ENCODE measurements at regions of chr7 and their contacts with region 1.

Region 1: DNA sequence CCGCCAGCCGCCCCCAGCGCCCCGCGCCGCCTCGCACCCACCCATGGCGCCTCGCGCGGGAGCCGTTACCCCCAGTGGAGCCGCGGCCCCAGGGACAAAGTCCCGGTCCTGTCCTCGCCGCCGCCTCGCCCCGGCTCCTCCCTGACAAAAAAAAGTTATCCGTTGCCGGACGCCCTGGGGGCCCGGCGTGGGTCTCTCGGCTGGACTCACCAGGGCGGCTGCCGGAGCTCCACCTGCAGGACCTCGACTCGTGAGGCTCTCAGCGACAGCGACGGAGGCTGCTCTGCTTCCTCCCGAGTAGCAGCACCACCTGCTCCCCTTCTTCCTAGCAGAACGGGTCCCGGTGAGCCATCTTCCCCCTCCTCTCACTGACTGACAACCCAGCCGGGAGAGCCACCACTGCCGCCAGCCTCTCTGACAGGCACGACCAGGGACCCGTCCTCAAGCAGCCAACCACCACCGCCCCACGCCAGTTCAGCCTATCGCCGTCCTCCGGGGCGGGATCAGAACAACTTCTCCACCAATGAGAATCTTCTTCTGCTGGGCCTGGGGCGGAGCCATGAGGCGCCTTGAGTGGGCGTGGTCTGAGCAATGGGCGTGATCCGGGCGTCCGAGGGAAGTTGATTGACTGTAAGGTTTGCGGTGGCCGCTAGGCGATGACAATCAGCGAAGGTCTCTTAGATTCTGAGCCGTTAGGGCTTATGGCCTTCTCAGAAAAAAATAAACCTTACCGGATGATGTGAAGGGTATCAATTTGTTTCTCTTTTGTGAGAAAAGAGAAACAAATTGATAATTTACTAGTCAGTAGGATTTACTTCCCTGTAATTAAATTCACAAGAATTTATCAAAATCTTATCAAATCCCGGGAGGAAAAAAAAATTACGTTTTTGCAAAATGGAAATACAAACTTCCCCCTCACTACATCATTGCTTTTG is at the start of gene HYCC1:
- DNase-seq: peak; percentile 99
- H3K4me3 Mint-ChIP-seq: peak within 1 kb of the TSS; percentile 89
- H3K27ac Mint-ChIP-seq: peak within 1 kb of the TSS; percentile 78
- H3K4me1 Mint-ChIP-seq: peaks cover 7% of the 10 kb centered on the region
- H3K27me3 Mint-ChIP-seq: peaks cover 3% of the 10 kb centered on the region
- total RNA-seq, gene HYCC1: 19.5 to 19.7 TPM

Region 2: DNA sequence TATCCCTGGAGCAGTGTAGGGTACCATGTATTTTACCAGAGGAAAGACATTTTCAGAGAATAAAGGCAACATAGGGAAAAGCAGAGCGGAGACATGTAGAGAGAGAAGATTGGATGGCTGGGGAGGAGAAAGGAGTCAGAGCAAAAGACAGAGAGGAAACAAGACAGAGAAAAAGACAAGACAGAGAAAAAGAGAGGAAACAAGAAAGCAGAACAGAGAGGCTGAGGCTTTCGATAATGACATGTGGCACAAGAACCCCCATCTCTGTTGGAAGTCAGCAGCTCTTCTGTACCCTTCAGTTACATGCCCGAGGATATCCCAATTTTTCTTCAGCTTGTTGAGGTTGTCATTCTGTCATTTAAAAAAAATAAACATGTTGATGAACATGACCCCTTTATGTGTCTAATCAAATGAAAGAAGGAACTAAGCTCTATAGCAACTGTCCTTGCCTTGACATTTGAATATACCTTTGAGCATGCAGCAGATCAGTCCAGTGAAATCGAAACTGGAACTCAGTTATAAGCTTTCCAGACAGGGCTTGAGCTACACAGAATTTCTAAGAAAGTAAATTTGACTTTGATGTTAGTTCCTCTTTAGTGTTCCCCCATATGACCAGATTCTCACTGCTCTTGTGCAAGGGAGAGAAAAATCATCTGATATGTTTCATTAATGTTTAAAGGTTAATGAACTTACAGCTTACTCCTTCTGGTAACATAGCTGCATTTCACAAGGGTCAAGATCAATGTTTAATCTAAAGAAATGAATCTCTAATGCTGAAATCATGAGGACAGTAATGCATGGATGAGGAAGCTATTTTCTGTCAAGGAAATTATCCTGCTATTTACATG is 1661.2 kb before region 1 on chr7:
- CTCF ChIA-PET with region 1: no interaction called
- intact Hi-C with region 1: loop called (anchors 5 kb)
- DNase-seq: no peak
- H3K4me3 Mint-ChIP-seq: no peak overlapping the region
- H3K27ac Mint-ChIP-seq: peak overlapping the region; percentile 24
- H3K4me1 Mint-ChIP-seq: peaks cover 46% of the 10 kb centered on the region
- H3K27me3 Mint-ChIP-seq: no peaks in the 10 kb centered on the region

Region 3: GRCh38 chr7:22672846-22673652 is 340.9 kb before region 1 on chr7:
- CTCF ChIA-PET with region 1: no interaction called
- intact Hi-C with region 1: loop called (anchors 2 kb)
- DNase-seq: no peak
- H3K4me3 Mint-ChIP-seq: no peak overlapping the region
- H3K27ac Mint-ChIP-seq: no peak overlapping the region
- H3K4me1 Mint-ChIP-seq: peaks cover 64% of the 10 kb centered on the region
- H3K27me3 Mint-ChIP-seq: no peaks in the 10 kb centered on the region

Region 4: DNA sequence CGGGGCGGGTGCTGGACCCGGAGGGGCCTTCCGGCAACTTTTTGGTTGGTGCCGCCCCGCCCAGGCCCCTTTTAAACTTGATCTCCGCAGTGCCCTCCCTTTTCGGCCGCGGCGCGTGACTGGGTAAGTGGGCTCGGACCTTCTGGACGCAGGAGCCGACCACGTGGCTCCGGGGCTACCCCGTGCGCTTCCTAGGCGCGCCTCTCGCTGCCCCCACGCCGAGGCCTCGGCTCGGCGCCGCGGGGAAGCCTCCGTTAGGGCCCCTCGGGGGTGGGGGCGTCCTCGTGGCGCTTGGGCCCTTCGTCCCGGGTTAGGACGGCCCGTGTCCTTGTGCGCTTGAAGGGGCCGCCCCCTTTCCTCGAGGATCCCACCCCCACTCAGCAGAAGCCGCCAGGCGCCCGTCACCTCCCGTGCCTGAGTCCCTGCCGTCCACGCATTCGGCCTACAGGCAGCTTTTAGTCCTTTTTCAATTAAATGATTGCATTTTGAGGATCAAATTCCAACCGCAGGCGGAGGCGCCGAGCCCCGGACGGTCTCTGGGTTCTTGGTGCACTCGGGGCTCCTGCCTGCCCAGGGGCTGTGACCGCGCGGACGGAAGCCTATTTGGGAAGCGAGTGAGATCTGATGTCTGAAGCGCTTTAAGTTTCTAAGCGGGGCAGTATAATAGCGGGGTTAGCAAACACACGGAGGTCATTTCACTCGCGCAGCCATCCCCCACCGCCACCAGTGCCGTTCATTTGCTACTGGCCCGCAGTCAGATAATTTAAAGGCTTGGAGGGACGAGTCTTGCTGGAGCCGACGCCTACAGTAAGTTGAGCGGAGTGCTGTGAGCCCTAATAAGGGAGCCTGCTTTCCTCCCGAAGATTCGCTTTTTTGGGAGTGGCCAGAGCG is 159.6 kb before region 1 on chr7:
- CTCF ChIA-PET with region 1: interaction called, 5 read pairs
- intact Hi-C with region 1: loop called (anchors 1 kb)
- DNase-seq: peak; percentile 78
- H3K4me3 Mint-ChIP-seq: peak overlapping the region; percentile 87
- H3K27ac Mint-ChIP-seq: peak overlapping the region; percentile 94
- H3K4me1 Mint-ChIP-seq: peaks cover 32% of the 10 kb centered on the region
- H3K27me3 Mint-ChIP-seq: peaks cover 3% of the 10 kb centered on the region

Region 5: GRCh38 chr7:23055582-23056178 is 41.7 kb after region 1 on chr7:
- CTCF ChIA-PET with region 1: interaction called, 11 read pairs
- intact Hi-C with region 1: loop called (anchors 1 kb)
- DNase-seq: peak; percentile 81
- H3K4me3 Mint-ChIP-seq: no peak overlapping the region
- H3K27ac Mint-ChIP-seq: no peak overlapping the region
- H3K4me1 Mint-ChIP-seq: peaks cover under 1% of the 10 kb centered on the region
- H3K27me3 Mint-ChIP-seq: no peaks in the 10 kb centered on the region

Region 6: DNA sequence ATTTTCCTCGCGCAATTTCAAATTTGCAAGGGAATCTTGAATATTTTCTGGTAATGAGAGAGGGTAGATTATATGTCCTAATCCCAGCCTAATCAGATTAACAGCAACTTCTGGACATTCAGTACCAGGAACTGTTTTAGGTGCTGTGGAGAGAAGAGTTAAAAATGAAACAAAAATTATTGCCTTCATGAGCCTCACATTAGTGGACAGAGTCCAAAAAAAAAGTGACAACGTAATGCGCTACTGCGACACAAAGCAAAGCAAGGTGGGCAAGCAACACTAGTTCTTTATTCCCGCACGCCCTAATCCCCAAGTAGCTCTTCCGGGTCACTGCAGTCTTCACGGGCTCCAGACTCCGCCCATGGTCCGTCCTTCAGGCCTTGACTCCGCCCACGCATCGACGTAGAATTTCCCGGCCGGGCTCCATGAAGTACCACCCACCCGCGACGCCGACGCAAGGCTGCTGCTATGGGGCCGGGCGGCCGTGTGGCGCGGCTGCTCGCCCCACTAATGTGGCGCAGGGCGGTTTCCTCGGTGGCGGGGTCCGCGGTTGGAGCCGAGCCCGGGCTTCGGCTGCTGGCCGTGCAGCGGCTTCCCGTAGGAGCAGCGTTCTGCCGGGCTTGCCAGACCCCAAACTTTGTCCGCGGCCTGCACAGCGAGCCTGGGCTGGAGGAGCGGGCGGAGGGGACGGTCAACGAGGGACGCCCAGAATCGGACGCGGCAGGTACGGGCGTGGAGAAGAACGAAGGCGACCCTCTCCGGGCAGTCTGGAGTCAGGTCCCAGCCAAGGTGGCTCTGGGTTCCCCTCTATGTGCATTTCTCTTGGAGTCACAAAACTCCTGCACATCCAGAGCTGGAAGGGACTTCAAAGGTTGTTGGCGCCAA is 285.1 kb after region 1 on chr7 and contains the start of gene MALSU1:
- CTCF ChIA-PET with region 1: no interaction called
- intact Hi-C with region 1: loop called (anchors 5 kb)
- DNase-seq: peak; percentile 99
- H3K4me3 Mint-ChIP-seq: peak within 1 kb of the TSS; percentile 96
- H3K27ac Mint-ChIP-seq: peak within 1 kb of the TSS; percentile 95
- H3K4me1 Mint-ChIP-seq: peaks cover 30% of the 10 kb centered on the region
- H3K27me3 Mint-ChIP-seq: no peaks in the 10 kb centered on the region
- total RNA-seq, gene MALSU1: 98.4 to 101 TPM

Measured in activated naive CD4-positive, alpha-beta T cell treated with anti-CD3 and anti-CD28 coated beads for 36 hours (primary cell).